IMR-90 (cell line): ENCODE measurements at regions of chr22 and their contacts with region 1.

Region 1: GRCh38 chr22:43993027-43993760 is 30.9 kb upstream of the PARVB start:
- DNase-seq: peak; percentile 64
- ATAC-seq: peak; percentile 93
- H3K4me3 ChIP-seq: no peak overlapping the region
- H3K27ac ChIP-seq: no peak overlapping the region
- H3K4me1 ChIP-seq: peaks cover 7% of the 10 kb centered on the region; the same call in 1 of the 2 replicates
- H3K27me3 ChIP-seq: no peaks in the 10 kb centered on the region
- CTCF ChIP-seq: peak; percentile 93
- POLR2A ChIP-seq: no peak
- RAD21 ChIP-seq: peak; percentile 95

Region 2: DNA sequence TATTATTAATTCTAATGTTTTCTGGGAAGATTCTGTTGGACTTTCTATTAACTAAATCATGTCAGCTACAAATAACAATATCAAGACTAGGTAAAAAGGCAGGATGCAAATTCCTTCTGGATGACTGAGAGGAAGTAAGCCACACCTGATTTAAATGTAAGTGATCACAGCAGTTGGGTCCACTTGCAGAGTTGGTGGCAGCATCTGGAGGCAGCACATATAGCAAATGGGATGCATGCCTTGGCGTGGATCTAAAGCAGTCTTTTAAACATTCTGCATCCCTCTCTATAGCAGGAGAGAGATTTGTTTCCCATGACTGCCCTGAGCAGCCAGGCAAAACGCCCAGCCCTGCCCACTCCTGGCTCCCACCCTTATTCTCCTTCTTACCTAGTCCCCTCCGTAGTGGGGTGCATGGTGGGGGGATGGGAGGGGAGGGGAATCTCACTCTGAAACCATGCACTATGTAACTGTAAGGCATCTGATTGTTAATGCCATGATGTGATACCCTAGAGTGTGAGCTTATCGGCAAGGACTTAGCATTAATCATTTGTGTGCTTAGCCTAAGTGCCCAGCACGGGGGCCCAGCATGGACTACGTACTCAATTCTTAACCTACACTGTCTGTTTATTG is 311.3 kb before region 1 on chr22:
- CTCF ChIA-PET with region 1: no interaction called
- POLR2A ChIA-PET with region 1: no interaction called
- dilution Hi-C with region 1: no loop called
- in situ Hi-C with region 1: no loop called
- intact Hi-C with region 1: no loop called
- DNase-seq: no peak
- ATAC-seq: no peak
- H3K4me3 ChIP-seq: no peak overlapping the region
- H3K27ac ChIP-seq: no peak overlapping the region
- H3K4me1 ChIP-seq: no peaks in the 10 kb centered on the region
- H3K27me3 ChIP-seq: no peaks in the 10 kb centered on the region; the same call in 1 of the 2 replicates
- CTCF ChIP-seq: no peak
- POLR2A ChIP-seq: no peak
- RAD21 ChIP-seq: no peak

Region 3: DNA sequence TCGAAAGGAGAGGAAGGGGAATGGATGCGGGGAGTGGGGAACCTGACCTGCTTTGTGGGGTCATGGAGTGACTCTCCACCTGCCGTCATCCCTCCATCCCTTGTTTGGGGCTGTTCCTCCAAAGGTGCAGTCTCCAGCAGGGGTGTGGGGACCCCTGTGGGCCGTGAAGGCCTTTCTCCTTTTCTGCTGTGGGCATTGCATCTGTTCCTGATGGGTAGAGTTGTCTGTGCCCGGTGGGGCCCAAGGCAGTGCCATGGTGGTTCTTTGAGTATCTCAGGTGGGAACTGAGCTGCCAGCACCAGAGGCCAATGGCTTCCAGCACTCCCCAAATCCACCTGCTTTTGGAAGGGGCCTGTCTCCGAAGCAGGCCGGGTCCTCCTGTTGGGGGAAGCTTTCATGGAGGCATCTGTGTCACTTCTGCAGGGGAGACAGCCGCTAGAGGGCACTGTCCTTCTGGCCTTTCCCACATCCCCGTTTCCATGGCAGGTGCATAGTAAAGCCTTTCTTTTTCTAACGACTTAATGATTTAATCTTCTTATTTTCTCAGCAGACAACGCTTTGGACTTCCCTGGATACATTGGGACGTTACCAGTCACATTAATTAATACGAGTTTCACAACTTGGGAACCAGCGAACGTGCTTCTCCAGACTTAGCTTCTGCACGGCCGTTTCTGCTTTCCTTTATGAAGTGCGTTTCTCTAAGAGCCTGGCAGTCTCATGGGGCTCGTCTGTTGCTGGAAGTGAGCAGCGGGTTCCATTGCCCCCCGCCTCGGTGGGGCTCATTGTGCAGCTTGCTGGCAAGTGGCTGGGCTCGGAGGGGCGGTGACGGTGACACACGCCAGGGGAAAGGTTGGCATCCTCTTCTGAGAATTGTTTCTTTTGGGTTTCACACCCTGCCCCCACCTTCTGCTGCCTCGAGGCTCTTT is 88.0 kb after region 1 on chr22:
- CTCF ChIA-PET with region 1: interaction called, 26 read pairs
- POLR2A ChIA-PET with region 1: no interaction called
- dilution Hi-C with region 1: no loop called
- in situ Hi-C with region 1: loop called (anchors 5 kb)
- intact Hi-C with region 1: loop called (anchors 1 kb)
- DNase-seq: peak; percentile 68
- ATAC-seq: peak; percentile 92
- H3K4me3 ChIP-seq: no peak overlapping the region
- H3K27ac ChIP-seq: no peak overlapping the region
- H3K4me1 ChIP-seq: peaks cover 2% of the 10 kb centered on the region; the same call in 1 of the 2 replicates
- H3K27me3 ChIP-seq: no peaks in the 10 kb centered on the region
- CTCF ChIP-seq: peak; percentile 82
- POLR2A ChIP-seq: no peak
- RAD21 ChIP-seq: peak; percentile 92

Region 4: DNA sequence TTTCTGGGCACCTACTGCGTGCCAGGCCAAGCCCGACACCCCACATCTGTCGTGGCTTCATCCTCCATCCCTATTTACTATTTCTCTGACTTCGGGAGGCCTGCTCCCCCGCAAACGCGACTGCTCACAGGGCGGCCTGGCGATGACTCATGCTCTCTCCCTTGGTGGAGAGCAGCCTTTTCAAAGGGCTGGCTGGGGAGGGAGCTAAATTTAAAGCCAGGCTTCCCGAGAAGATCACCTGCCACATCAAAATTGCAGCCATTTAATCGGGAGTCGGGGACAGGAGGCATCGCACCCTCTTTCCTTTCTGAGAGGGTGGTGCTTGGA is 344.4 kb after region 1 on chr22:
- CTCF ChIA-PET with region 1: interaction called, 3 read pairs
- POLR2A ChIA-PET with region 1: no interaction called
- dilution Hi-C with region 1: no loop called
- in situ Hi-C with region 1: loop called (anchors 10 kb)
- intact Hi-C with region 1: no loop called
- DNase-seq: peak; percentile 75
- ATAC-seq: peak; percentile 87
- H3K4me3 ChIP-seq: no peak overlapping the region
- H3K27ac ChIP-seq: no peak overlapping the region
- H3K4me1 ChIP-seq: peaks cover 27% of the 10 kb centered on the region
- H3K27me3 ChIP-seq: 0 out of 2 replicates have a peak, but pooled peaks cover 2% of the 10 kb centered on the region
- CTCF ChIP-seq: no peak
- POLR2A ChIP-seq: no peak
- RAD21 ChIP-seq: peak; percentile 28; the same call in 1 of the 2 replicates

Region 5: GRCh38 chr22:44625981-44626687 is 632.9 kb after region 1 on chr22:
- CTCF ChIA-PET with region 1: interaction called, 10 read pairs
- POLR2A ChIA-PET with region 1: no interaction called
- dilution Hi-C with region 1: no loop called
- in situ Hi-C with region 1: loop called (anchors 5 kb)
- intact Hi-C with region 1: loop called (anchors 1 kb)
- DNase-seq: peak; percentile 45
- ATAC-seq: peak; percentile 86
- H3K4me3 ChIP-seq: no peak overlapping the region
- H3K27ac ChIP-seq: no peak overlapping the region
- H3K4me1 ChIP-seq: no peaks in the 10 kb centered on the region
- H3K27me3 ChIP-seq: peaks cover 8% of the 10 kb centered on the region; the same call in 1 of the 2 replicates
- CTCF ChIP-seq: peak; percentile 99
- POLR2A ChIP-seq: peak; percentile 63
- RAD21 ChIP-seq: peak; percentile 100